Activated naive CD4-positive, alpha-beta T cell treated with anti-CD3 and anti-CD28 coated beads for 36 hours (primary cell): ENCODE measurements at regions of chr10 and their contacts with region 1.

Region 1: GRCh38 chr10:8053446-8054290 is 820 bp upstream of the GATA3 start:
- DNase-seq: peak; percentile 94
- H3K4me3 Mint-ChIP-seq: peak overlapping the region; percentile 76
- H3K27ac Mint-ChIP-seq: peak overlapping the region; percentile 77
- H3K4me1 Mint-ChIP-seq: peaks cover 43% of the 10 kb centered on the region
- H3K27me3 Mint-ChIP-seq: peaks cover 20% of the 10 kb centered on the region

Region 2: GRCh38 chr10:7525314-7526016 is 528.2 kb before region 1 on chr10:
- CTCF ChIA-PET with region 1: no interaction called
- intact Hi-C with region 1: loop called (anchors 5 kb)
- DNase-seq: peak; percentile 83
- H3K4me3 Mint-ChIP-seq: no peak overlapping the region
- H3K27ac Mint-ChIP-seq: no peak overlapping the region
- H3K4me1 Mint-ChIP-seq: peaks cover 4% of the 10 kb centered on the region
- H3K27me3 Mint-ChIP-seq: no peaks in the 10 kb centered on the region

Region 3: GRCh38 chr10:7872041-7872442 is 181.6 kb before region 1 on chr10:
- CTCF ChIA-PET with region 1: interaction called, 3 read pairs
- intact Hi-C with region 1: loop called (anchors 2 kb)
- DNase-seq: no peak
- H3K4me3 Mint-ChIP-seq: peak overlapping the region; percentile 64
- H3K27ac Mint-ChIP-seq: no peak overlapping the region
- H3K4me1 Mint-ChIP-seq: peaks cover 6% of the 10 kb centered on the region
- H3K27me3 Mint-ChIP-seq: no peaks in the 10 kb centered on the region

Region 4: GRCh38 chr10:8404391-8405120 is 350.9 kb after region 1 on chr10:
- CTCF ChIA-PET with region 1: no interaction called
- intact Hi-C with region 1: loop called (anchors 2 kb)
- DNase-seq: peak; percentile 53
- H3K4me3 Mint-ChIP-seq: peak overlapping the region; percentile 4
- H3K27ac Mint-ChIP-seq: no peak overlapping the region
- H3K4me1 Mint-ChIP-seq: peaks cover 58% of the 10 kb centered on the region
- H3K27me3 Mint-ChIP-seq: no peaks in the 10 kb centered on the region

Region 5: DNA sequence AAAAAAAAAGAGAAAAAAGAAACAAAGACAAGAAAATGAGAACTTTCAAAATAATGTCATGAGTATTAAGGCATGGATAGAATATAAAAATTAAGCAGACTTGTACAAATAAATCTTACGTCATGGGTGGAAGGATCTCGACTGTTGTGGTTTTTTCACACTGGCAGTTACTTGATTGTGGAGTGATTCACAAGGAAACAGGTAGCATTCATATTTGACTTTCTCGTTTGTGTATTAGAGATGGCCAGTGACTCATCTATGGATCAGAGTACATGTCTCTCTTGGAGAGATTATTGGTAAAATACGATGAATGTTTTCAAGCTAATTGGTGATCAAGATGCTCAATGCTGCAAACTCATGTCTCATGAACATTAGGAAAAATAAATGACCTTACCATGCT is 565.2 kb after region 1 on chr10:
- CTCF ChIA-PET with region 1: no interaction called
- intact Hi-C with region 1: no loop called
- DNase-seq: no peak
- H3K4me3 Mint-ChIP-seq: no peak overlapping the region
- H3K27ac Mint-ChIP-seq: no peak overlapping the region
- H3K4me1 Mint-ChIP-seq: peaks cover 10% of the 10 kb centered on the region
- H3K27me3 Mint-ChIP-seq: no peaks in the 10 kb centered on the region

Region 6: DNA sequence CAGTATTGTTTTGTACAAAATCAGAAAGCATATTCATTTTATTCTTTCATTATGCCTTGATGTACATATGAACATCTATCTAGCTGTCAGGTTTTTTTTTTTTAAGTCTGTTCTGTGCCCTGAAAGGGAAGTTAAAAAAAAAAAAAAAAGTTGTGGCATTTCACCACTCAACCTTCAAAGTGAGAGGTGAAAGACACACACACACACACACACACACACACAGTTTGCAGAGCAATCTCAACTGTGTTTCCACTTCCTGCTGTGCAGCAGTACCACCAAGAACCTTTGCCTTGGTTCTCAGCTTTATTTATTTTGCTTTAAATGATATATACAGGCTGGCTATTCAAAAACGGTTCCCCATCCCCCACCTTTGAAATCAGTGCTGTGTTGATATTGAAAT is 956.4 kb after region 1 on chr10:
- CTCF ChIA-PET with region 1: no interaction called
- intact Hi-C with region 1: loop called (anchors 10 kb)
- DNase-seq: peak; percentile 39
- H3K4me3 Mint-ChIP-seq: no peak overlapping the region
- H3K27ac Mint-ChIP-seq: no peak overlapping the region
- H3K4me1 Mint-ChIP-seq: peaks cover 47% of the 10 kb centered on the region
- H3K27me3 Mint-ChIP-seq: no peaks in the 10 kb centered on the region

Region 7: GRCh38 chr10:9294865-9295264 is 1241.2 kb after region 1 on chr10:
- CTCF ChIA-PET with region 1: no interaction called
- intact Hi-C with region 1: loop called (anchors 2 kb)
- DNase-seq: peak; percentile 17
- H3K4me3 Mint-ChIP-seq: no peak overlapping the region
- H3K27ac Mint-ChIP-seq: no peak overlapping the region
- H3K4me1 Mint-ChIP-seq: peaks cover 17% of the 10 kb centered on the region
- H3K27me3 Mint-ChIP-seq: peaks cover 8% of the 10 kb centered on the region